ENCODE measurements at regions of chr9 and their contacts with region 1.

Region 1: DNA sequence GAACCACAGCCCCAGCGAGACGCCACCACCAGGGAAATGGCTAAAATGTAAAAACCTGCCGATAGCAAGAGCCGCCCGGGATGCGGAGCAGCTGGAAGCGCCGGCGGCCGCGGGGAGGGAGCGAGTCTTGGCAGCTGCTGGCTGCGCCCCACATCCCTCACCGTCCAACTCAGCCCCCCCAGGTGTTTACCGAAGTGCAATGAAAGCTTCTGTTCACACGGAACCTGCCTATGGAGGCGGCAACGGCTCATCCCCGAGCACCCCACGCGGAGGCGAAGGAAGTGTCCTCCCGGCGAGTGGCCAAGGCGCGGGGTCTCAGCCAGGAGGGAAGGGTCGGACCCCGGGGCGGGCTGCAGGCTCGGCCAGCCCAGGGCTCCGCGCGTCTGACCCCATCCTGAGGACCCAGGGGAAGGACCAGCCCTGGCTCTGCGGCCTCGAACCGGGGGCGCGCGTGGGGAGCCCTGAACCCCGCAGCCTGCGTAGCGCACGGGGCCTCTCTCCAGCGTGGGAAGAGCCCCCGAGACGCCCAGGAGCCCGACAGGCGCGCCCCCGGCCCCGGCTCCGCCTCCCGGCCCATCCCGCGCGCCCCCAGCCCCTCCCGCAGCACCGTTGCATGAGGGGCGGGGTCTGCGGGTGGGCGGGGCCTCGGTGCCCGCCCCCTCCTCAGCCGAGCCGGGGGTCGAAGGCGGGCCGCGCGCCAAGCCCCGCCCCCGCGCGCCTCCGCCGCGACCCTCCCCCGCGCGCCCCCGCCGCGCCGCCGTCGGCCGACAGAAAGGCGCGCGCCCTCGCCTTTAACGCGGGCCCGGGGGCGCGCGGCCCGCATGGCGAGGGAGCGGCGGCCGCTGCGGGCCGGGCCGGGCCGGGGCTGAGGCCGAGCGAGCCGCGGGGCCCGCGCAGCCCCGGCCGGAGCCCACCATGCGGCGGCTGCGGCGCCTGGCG is at the start of gene DIPK1B:
- DNase-seq: no peak
- ATAC-seq: peak in 2 of 8 donors; percentile 2 to 13
- H3K4me3 ChIP-seq: peak within 1 kb of the TSS; percentile 54 to 90 (median 73)
- H3K27ac ChIP-seq: peak within 1 kb of the TSS; percentile 47 to 92 (median 86)
- H3K4me1 ChIP-seq: peaks cover 14 to 45% (median 38%) of the 10 kb centered on the region in 9 donors
- H3K27me3 ChIP-seq: peaks cover 0 to 54% (median 0%) of the 10 kb centered on the region in 7 donors
- CTCF ChIP-seq: no peak
- total RNA-seq, gene DIPK1B: 15.7 to 26.1 (median 17.9) TPM

Region 2: GRCh38 chr9:136655536-136656182 is 56.4 kb before region 1 on chr9:
- intact Hi-C with region 1: loop called in 1 of 10 experiments (anchors 5 kb)
- DNase-seq: peak; percentile 73 to 92
- ATAC-seq: peak; percentile 56 to 86 (median 81)
- H3K4me3 ChIP-seq: peak overlapping the region in 6 of 10 donors; percentile 74 to 83 (median 76)
- H3K27ac ChIP-seq: peak overlapping the region; percentile 92 to 99 (median 96)
- H3K4me1 ChIP-seq: peaks cover 0 to 63% (median 30%) of the 10 kb centered on the region in 9 donors
- H3K27me3 ChIP-seq: peaks cover 0 to 72% (median 0%) of the 10 kb centered on the region in 7 donors
- CTCF ChIP-seq: no peak